ENCODE measurements at regions of chr9 and their contacts with region 1.

Region 1: GRCh38 chr9:115013998-115014397 is 83.6 kb upstream of the TNFSF8 start:
- DNase-seq: no peak
- ATAC-seq: peak; percentile 90
- H3K4me3 ChIP-seq: no peak overlapping the region
- H3K27ac ChIP-seq: no peak overlapping the region
- H3K4me1 ChIP-seq: no peaks in the 10 kb centered on the region
- H3K27me3 ChIP-seq: peaks cover 0 to 2% of the 10 kb centered on the region in 2 experiments; a peak in 3 of 4 replicates
- CTCF ChIP-seq: peak; percentile 63 to 86 (median 68)
- EP300 ChIP-seq: no peak
- POLR2A ChIP-seq: no peak
- RAD21 ChIP-seq: peak; percentile 98

Region 2: DNA sequence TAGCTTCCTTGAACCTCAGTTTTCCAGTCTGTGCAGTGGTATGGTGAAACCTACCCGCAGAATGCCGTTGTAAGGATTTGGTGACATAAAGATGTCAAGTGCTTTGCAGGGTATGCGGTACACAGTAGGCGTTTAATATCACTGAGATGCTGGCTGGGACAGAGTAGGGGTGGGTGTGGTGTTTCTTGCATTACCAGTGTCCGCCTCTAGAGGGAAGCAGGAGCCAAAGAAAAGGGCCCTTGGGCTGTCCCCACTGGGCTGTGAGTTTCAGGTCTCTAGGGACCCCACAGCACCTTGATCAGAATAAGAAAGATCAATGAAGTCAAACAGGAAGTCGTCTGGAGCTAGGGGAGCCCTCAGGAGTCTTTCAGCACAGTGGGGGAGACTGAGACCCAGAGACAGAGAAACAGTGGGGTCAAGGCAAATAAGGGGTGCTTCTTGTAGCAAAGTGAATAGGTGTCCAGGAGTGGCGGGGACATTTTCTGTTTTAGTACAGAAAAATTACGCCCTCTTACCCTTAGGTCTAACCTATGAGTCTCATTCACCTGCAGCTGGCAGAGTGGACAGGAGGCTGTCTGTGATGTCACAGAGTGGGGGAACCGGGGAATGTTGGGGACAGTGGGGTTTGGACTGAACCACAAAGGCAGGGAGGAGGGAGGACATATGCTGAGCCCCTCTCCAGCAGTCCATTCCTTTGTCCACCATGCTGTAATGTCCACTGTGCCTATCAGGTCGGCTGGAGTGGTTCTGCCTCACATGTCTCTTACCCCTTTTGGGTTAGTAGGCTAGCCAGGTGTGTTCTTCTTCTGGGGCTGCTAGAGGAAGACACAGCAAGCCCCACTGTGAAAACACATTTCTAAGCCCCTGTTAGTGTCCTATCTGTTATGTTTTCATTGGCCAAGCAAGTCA is 351.7 kb before region 1 on chr9:
- CTCF ChIA-PET with region 1: interaction called, 5 read pairs
- POLR2A ChIA-PET with region 1: no interaction called
- RAD21 ChIA-PET with region 1: interaction called, 5 read pairs
- SMC1A ChIA-PET with region 1: interaction called, 8 read pairs
- in situ Hi-C with region 1: no loop called
- intact Hi-C with region 1: loop called (anchors 1 kb)
- DNase-seq: no peak
- ATAC-seq: peak; percentile 96
- H3K4me3 ChIP-seq: no peak overlapping the region
- H3K27ac ChIP-seq: no peak overlapping the region
- H3K4me1 ChIP-seq: no peaks in the 10 kb centered on the region
- H3K27me3 ChIP-seq: no peaks in the 10 kb centered on the region
- CTCF ChIP-seq: peak; percentile 75 to 90 (median 81)
- EP300 ChIP-seq: no peak
- POLR2A ChIP-seq: no peak
- RAD21 ChIP-seq: peak; percentile 69

Region 3: DNA sequence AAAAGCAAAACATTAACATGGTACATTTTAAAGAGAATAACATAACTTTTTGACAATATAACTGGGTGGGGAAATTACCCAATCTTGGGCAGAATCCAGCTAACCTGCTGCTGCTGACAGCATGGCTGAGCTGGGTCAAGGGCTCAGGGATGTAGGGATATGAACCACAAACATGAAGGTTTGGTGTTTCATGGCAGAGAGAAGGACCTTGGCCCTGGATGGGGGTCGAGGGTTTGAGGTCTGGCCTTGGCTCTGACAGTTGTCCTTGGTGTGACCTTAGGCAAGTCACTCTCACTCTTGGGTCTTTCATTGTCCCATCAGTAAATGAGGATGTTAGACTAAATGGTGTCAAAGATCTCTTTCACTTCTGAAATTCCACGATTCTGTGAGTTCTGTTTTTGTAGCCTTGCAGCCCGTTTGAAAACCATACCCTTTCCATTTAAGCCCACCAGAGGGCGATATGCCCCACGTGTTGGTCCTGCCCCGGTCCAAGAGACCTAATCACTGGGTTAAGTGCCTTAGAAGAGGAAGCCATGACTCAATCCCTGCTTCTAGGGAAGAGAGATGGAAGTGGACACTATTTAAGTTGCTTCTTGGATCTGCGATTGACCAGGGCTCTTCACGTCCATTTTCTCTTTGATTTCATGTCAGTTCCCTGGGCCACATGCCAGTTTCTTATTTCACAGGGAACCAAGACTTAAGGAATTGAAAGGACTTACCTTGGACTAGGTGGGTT is 275.2 kb before region 1 on chr9:
- CTCF ChIA-PET with region 1: interaction called, 27 read pairs
- POLR2A ChIA-PET with region 1: no interaction called
- RAD21 ChIA-PET with region 1: interaction called, 17 read pairs
- SMC1A ChIA-PET with region 1: interaction called, 35 read pairs
- in situ Hi-C with region 1: loop called (anchors 5 kb)
- intact Hi-C with region 1: loop called (anchors 1 kb)
- DNase-seq: peak; percentile 24
- ATAC-seq: peak; percentile 95
- H3K4me3 ChIP-seq: no peak overlapping the region
- H3K27ac ChIP-seq: no peak overlapping the region
- H3K4me1 ChIP-seq: no peaks in the 10 kb centered on the region
- H3K27me3 ChIP-seq: peaks cover 1 to 3% of the 10 kb centered on the region in 2 experiments; a peak in 2 of 4 replicates
- CTCF ChIP-seq: peak; percentile 76 to 88 (median 82)
- EP300 ChIP-seq: no peak
- POLR2A ChIP-seq: no peak
- RAD21 ChIP-seq: peak; percentile 98

Region 4: GRCh38 chr9:114906908-114907571 is 107.0 kb before region 1 on chr9:
- CTCF ChIA-PET with region 1: interaction called, 52 read pairs
- POLR2A ChIA-PET with region 1: no interaction called
- RAD21 ChIA-PET with region 1: interaction called, 7 read pairs
- SMC1A ChIA-PET with region 1: interaction called, 33 read pairs
- in situ Hi-C with region 1: loop called (anchors 5 kb)
- intact Hi-C with region 1: loop called (anchors 2 kb)
- DNase-seq: no peak
- ATAC-seq: peak; percentile 76
- H3K4me3 ChIP-seq: no peak overlapping the region
- H3K27ac ChIP-seq: no peak overlapping the region
- H3K4me1 ChIP-seq: peaks cover 13% of the 10 kb centered on the region
- H3K27me3 ChIP-seq: no peaks in the 10 kb centered on the region
- CTCF ChIP-seq: peak; percentile 34 to 50 (median 39); a peak in 4 of 6 replicates
- EP300 ChIP-seq: no peak
- POLR2A ChIP-seq: no peak
- RAD21 ChIP-seq: peak; percentile 67

Region 5: GRCh38 chr9:114914139-114914538 is 99.9 kb before region 1 on chr9:
- CTCF ChIA-PET with region 1: interaction called, 52 read pairs
- POLR2A ChIA-PET with region 1: interaction called, 4 read pairs
- RAD21 ChIA-PET with region 1: interaction called, 8 read pairs
- SMC1A ChIA-PET with region 1: interaction called, 33 read pairs
- in situ Hi-C with region 1: loop called (anchors 5 kb)
- intact Hi-C with region 1: loop called (anchors 2 kb)
- DNase-seq: no peak
- ATAC-seq: peak; percentile 57; the same call in 2 of the 3 replicates
- H3K4me3 ChIP-seq: no peak overlapping the region
- H3K27ac ChIP-seq: no peak overlapping the region
- H3K4me1 ChIP-seq: peaks cover 7% of the 10 kb centered on the region; the same call in 1 of the 2 replicates
- H3K27me3 ChIP-seq: 0 out of 4 replicates have a peak, but pooled peaks cover 1 to 4% of the 10 kb centered on the region in 2 experiments
- CTCF ChIP-seq: peak; percentile 13 to 33 (median 18); a peak in 1 of 6 replicates
- EP300 ChIP-seq: no peak
- POLR2A ChIP-seq: no peak
- RAD21 ChIP-seq: peak; percentile 19; the same call in 1 of the 2 replicates

Region 6: DNA sequence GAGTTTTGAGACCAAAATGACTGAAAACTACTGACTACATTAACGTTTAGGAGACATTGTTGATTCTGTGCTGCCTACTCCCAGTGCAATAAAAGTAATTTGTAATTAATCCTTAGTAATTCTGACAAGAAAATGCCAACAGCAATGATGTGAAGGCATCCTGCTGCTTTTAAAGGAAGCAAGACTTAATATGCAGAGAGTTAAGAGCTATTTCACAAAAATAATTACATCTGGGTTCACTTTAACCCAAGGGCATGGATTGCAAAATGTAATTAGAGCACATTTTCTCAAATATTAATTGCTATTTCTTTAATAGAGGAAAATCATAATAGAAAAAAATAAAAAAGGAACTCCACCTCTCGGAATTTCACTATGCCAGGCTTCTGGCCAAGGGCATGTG is 61.0 kb before region 1 on chr9:
- CTCF ChIA-PET with region 1: interaction called, 17 read pairs
- POLR2A ChIA-PET with region 1: no interaction called
- RAD21 ChIA-PET with region 1: interaction called, 4 read pairs
- SMC1A ChIA-PET with region 1: interaction called, 3 read pairs
- in situ Hi-C with region 1: no loop called
- intact Hi-C with region 1: no loop called
- DNase-seq: no peak
- ATAC-seq: no peak
- H3K4me3 ChIP-seq: no peak overlapping the region
- H3K27ac ChIP-seq: no peak overlapping the region
- H3K4me1 ChIP-seq: no peaks in the 10 kb centered on the region
- H3K27me3 ChIP-seq: no peaks in the 10 kb centered on the region; a peak in 1 of 4 replicates
- CTCF ChIP-seq: no peak
- EP300 ChIP-seq: no peak
- POLR2A ChIP-seq: no peak
- RAD21 ChIP-seq: no peak

Measured in GM12878 (cell line).